T-cell (primary cell): ENCODE measurements at regions of chr9 and their contacts with region 1.

Region 1: DNA sequence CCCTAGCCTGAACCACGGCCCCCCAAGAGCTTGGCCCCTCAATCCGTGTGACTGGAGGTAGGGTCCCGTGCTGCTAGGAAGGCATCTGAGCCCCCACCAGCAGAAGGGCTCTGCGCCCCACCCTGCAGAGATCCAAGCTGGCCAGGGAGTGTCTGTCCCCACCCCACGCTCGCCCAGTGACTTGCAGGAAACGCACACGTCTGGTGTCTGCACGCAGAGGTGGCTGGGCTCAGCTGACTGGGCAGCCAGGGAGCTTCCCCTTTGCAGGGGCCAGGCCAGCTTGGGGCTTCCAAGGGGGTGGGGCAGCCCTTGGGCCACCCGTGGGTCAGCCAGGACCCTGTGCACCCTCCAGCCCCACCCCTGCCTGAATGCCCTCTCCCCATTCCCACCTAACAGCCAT is 24.3 kb downstream of the NOTCH1 start:
- DNase-seq: peak in 1 of 35 experiments; percentile 22
- ATAC-seq: no peak
- H3K4me3 ChIP-seq: no peak overlapping the region
- H3K4me3 Mint-ChIP-seq: no peak overlapping the region
- H3K27ac ChIP-seq: no peak overlapping the region
- H3K27ac Mint-ChIP-seq: no peak overlapping the region
- H3K4me1 ChIP-seq: peaks cover 0 to 2% of the 10 kb centered on the region in 2 experiments
- H3K4me1 Mint-ChIP-seq: peaks cover 0 to 3% (median 0%) of the 10 kb centered on the region in 3 donors
- H3K27me3 ChIP-seq: no peaks in the 10 kb centered on the region
- H3K27me3 Mint-ChIP-seq: no peaks in the 10 kb centered on the region

Region 2: GRCh38 chr9:136996361-136997281 is 475.1 kb after region 1 on chr9 and contains the start of gene CLIC3:
- CTCF ChIA-PET with region 1: no interaction called
- POLR2A ChIA-PET with region 1: interaction called in 1 of 2 experiments, 12 read pairs
- DNase-seq: peak in 31 of 35 experiments; percentile 25 to 76 (median 46)
- ATAC-seq: peak; percentile 26 to 37 (median 29)
- H3K4me3 ChIP-seq: peak within 1 kb of the TSS; percentile 40 to 57
- H3K4me3 Mint-ChIP-seq: peak within 1 kb of the TSS; percentile 67 to 76 (median 67)
- H3K27ac ChIP-seq: peak within 1 kb of the TSS; percentile 80
- H3K27ac Mint-ChIP-seq: peak within 1 kb of the TSS; percentile 91 to 95
- H3K4me1 ChIP-seq: peaks cover 22 to 93% of the 10 kb centered on the region in 2 experiments
- H3K4me1 Mint-ChIP-seq: peaks cover 26 to 50% (median 48%) of the 10 kb centered on the region in 3 donors
- H3K27me3 ChIP-seq: peaks cover 0 to 28% of the 10 kb centered on the region in 2 experiments
- H3K27me3 Mint-ChIP-seq: peaks cover 0 to 4% of the 10 kb centered on the region in 2 donors
- total RNA-seq, gene CLIC3: 5.4 to 24.7 (median 8.0) TPM